Lower leg skin (tissue), 4 donors: ENCODE measurements at regions of chrX and their contacts with region 1.

Region 1: GRCh38 chrX:143047511-143047910 is 21.8 kb downstream of the SPANXN4 start:
- DNase-seq: no peak
- H3K4me3 ChIP-seq: no peak overlapping the region
- CTCF ChIP-seq: no peak
- POLR2A ChIP-seq: no peak

Region 2: DNA sequence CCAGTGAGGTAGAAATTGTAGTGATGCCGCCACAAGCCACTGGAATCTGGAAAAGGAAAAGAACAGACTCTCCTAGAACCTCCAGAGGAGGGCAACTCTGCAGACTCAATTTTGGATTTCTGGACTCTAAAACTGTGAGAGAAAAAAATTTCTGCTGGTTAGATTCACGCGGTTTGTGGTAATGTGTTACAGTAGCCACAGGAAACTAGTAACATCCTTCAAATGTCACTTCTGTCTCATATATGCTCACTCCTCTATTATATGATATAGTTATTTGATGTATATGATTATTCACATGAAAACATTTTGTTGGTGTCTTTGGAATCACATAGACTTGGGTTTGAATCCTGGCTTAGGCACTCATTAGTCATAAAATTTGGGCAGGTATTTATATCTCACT is 1889.4 kb before region 1 on chrX:
- intact Hi-C with region 1: no loop called
- DNase-seq: no peak
- H3K4me3 ChIP-seq: no peak overlapping the region
- CTCF ChIP-seq: no peak
- POLR2A ChIP-seq: no peak

Region 3: GRCh38 chrX:143094417-143095110 is 47.1 kb after region 1 on chrX:
- intact Hi-C with region 1: loop called (anchors 2 kb)
- DNase-seq: no peak
- H3K4me3 ChIP-seq: no peak overlapping the region
- CTCF ChIP-seq: no peak
- POLR2A ChIP-seq: no peak